Gastrocnemius medialis (tissue), 4 donors: ENCODE measurements at regions of chr9 and their contacts with region 1.

Region 1: GRCh38 chr9:68446836-68447235 is 90.4 kb downstream of the PGM5 start:
- DNase-seq: no peak
- ATAC-seq: no peak
- H3K4me3 ChIP-seq: no peak overlapping the region
- H3K27ac ChIP-seq: no peak overlapping the region
- H3K4me1 ChIP-seq: peaks cover 0 to 6% of the 10 kb centered on the region in 2 donors
- H3K27me3 ChIP-seq: no peaks in the 10 kb centered on the region
- CTCF ChIP-seq: no peak
- POLR2A ChIP-seq: no peak

Region 2: GRCh38 chr9:68493958-68494577 is 47.2 kb after region 1 on chr9:
- in situ Hi-C with region 1: no loop called
- intact Hi-C with region 1: loop called (anchors 10 kb)
- DNase-seq: no peak
- ATAC-seq: no peak
- H3K4me3 ChIP-seq: no peak overlapping the region
- H3K27ac ChIP-seq: no peak overlapping the region
- H3K4me1 ChIP-seq: peaks cover 0 to 6% of the 10 kb centered on the region in 2 donors
- H3K27me3 ChIP-seq: no peaks in the 10 kb centered on the region
- CTCF ChIP-seq: no peak
- POLR2A ChIP-seq: no peak

Region 3: DNA sequence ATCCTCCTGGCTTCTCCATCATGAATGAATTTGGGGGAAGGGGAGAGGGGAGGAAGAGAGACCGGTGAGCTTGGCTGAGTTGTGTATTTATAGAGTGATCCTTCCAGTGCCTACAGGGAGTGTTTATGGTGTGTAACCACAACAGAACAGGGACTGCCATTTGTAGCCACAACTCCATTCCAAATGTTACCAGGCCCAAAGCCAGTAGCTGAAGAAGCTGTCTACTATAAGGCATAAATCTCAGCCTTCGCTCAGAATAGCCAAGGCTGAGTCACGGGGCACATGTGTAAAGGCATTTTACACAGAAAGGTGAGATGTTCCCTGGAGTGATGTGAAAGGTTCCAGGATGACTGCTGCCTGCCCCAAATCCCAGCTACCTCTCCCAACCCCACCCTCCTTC is 91.4 kb after region 1 on chr9:
- in situ Hi-C with region 1: no loop called
- intact Hi-C with region 1: no loop called
- DNase-seq: peak; percentile 86 to 87
- ATAC-seq: peak; percentile 98 to 99
- H3K4me3 ChIP-seq: no peak overlapping the region
- H3K27ac ChIP-seq: peak overlapping the region; percentile 79 to 85 (median 82)
- H3K4me1 ChIP-seq: peaks cover 9 to 10% of the 10 kb centered on the region in 2 donors
- H3K27me3 ChIP-seq: no peaks in the 10 kb centered on the region
- CTCF ChIP-seq: no peak
- POLR2A ChIP-seq: no peak